Posterior cingulate gyrus (tissue), 11 donors: ENCODE measurements at regions of chr5 and their contacts with region 1.

Region 1: GRCh38 chr5:15794052-15794985 is 294.3 kb downstream of the FBXL7 start:
- DNase-seq: no peak

Region 2: GRCh38 chr5:15105796-15106393 is 688.4 kb before region 1 on chr5:
- intact Hi-C with region 1: loop called (anchors 5 kb)
- DNase-seq: peak in 6 of 10 donors; percentile 26 to 85 (median 52)

Region 3: DNA sequence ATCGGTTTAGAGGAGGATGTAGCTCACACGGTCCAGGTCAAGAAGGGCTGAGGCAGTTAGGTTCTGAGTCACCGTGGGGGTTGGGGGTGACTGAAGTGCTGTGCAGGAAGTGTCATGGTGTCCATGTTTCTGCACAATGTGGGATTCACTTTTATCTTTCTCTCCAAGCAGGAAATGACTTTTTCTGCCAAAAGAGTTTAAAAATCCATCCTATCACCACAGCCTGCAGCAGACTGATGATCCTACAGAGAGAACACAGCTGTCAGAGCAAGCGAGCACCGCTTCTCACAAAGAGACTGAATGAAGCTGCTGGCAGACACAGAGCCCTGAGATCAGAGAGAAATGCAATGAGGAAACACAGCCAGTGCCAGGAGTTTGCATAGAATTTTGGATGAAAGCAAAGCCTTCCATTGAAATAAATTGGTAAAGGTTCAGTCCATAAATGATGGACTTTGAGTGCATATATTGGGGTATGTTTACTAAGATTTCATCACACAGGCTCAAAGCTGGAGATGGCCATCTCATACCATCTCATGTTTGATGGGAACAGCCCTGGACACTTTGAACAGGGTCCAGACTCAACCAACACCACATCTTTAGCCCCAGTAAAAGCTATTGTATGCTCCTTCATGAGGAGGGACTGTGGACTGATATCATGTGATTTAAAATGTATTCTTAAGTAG is 508.3 kb before region 1 on chr5:
- intact Hi-C with region 1: loop called (anchors 5 kb)
- DNase-seq: peak in 2 of 10 donors; percentile 25 to 81

Region 4: DNA sequence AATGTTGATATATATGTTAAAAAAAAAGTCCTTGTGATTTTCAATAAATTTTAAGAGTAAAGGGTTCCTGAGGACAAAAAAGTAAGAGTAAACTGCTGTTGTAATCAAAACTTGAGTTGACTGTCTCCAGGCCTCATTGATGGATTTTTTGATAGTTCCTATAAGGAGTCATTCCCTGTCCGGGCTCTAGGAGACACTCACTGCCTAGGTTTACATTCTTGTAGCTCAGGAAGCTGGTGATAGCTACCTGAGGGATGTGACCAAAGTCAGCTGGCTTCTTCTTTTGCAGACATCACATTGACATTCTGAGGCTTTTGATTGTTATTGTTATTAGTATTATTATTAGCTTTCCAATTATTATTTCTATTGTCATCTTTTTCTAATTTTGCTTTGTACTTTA is 410.9 kb before region 1 on chr5:
- intact Hi-C with region 1: loop called (anchors 5 kb)
- DNase-seq: no peak

Region 5: GRCh38 chr5:15499528-15500324 is 294.6 kb before region 1 on chr5 and contains the start of gene FBXL7:
- intact Hi-C with region 1: loop called (anchors 5 kb)
- DNase-seq: peak; percentile 70 to 96 (median 74)

Region 6: GRCh38 chr5:15515229-15515628 is 279.1 kb before region 1 on chr5:
- intact Hi-C with region 1: loop called (anchors 5 kb)
- DNase-seq: no peak